Psoas muscle (tissue), 8 donors: ENCODE measurements at regions of chr4 and their contacts with region 1.

Region 1: GRCh38 chr4:85968945-85969819 is 390.7 kb downstream of the MAPK10 start:
- DNase-seq: no peak
- ATAC-seq: peak; percentile 38 to 77 (median 50)
- H3K4me3 ChIP-seq: no peak overlapping the region
- H3K27ac ChIP-seq: no peak overlapping the region
- H3K4me1 ChIP-seq: peaks cover 8% of the 10 kb centered on the region
- H3K27me3 ChIP-seq: no peaks in the 10 kb centered on the region
- CTCF ChIP-seq: peak; percentile 61

Region 2: GRCh38 chr4:84661191-84661939 is 1307.8 kb before region 1 on chr4:
- intact Hi-C with region 1: no loop called
- DNase-seq: no peak
- ATAC-seq: no peak
- H3K4me3 ChIP-seq: no peak overlapping the region
- H3K27ac ChIP-seq: no peak overlapping the region
- H3K4me1 ChIP-seq: no peaks in the 10 kb centered on the region
- H3K27me3 ChIP-seq: no peaks in the 10 kb centered on the region
- CTCF ChIP-seq: no peak

Region 3: GRCh38 chr4:85147439-85148076 is 821.6 kb before region 1 on chr4:
- intact Hi-C with region 1: loop called in 1 of 2 experiments (anchors 10 kb)
- DNase-seq: peak in 1 of 2 donors; percentile 54
- ATAC-seq: peak in 2 of 4 donors; percentile 57 to 79
- H3K4me3 ChIP-seq: peak overlapping the region; percentile 16
- H3K27ac ChIP-seq: no peak overlapping the region
- H3K4me1 ChIP-seq: no peaks in the 10 kb centered on the region
- H3K27me3 ChIP-seq: no peaks in the 10 kb centered on the region
- CTCF ChIP-seq: peak; percentile 61

Region 4: GRCh38 chr4:85798012-85798770 is 171.0 kb before region 1 on chr4:
- intact Hi-C with region 1: loop called (anchors 2 to 5 kb)
- DNase-seq: no peak
- ATAC-seq: no peak
- H3K4me3 ChIP-seq: no peak overlapping the region
- H3K27ac ChIP-seq: no peak overlapping the region
- H3K4me1 ChIP-seq: peaks cover under 1% of the 10 kb centered on the region
- H3K27me3 ChIP-seq: no peaks in the 10 kb centered on the region
- CTCF ChIP-seq: no peak

Region 5: GRCh38 chr4:85826060-85826678 is 143.0 kb before region 1 on chr4:
- intact Hi-C with region 1: loop called in 1 of 2 experiments (anchors 10 kb)
- DNase-seq: no peak
- ATAC-seq: peak in 2 of 4 donors; percentile 36 to 39
- H3K4me3 ChIP-seq: no peak overlapping the region
- H3K27ac ChIP-seq: peak overlapping the region; percentile 31
- H3K4me1 ChIP-seq: peaks cover 17% of the 10 kb centered on the region
- H3K27me3 ChIP-seq: no peaks in the 10 kb centered on the region
- CTCF ChIP-seq: no peak

Region 6: DNA sequence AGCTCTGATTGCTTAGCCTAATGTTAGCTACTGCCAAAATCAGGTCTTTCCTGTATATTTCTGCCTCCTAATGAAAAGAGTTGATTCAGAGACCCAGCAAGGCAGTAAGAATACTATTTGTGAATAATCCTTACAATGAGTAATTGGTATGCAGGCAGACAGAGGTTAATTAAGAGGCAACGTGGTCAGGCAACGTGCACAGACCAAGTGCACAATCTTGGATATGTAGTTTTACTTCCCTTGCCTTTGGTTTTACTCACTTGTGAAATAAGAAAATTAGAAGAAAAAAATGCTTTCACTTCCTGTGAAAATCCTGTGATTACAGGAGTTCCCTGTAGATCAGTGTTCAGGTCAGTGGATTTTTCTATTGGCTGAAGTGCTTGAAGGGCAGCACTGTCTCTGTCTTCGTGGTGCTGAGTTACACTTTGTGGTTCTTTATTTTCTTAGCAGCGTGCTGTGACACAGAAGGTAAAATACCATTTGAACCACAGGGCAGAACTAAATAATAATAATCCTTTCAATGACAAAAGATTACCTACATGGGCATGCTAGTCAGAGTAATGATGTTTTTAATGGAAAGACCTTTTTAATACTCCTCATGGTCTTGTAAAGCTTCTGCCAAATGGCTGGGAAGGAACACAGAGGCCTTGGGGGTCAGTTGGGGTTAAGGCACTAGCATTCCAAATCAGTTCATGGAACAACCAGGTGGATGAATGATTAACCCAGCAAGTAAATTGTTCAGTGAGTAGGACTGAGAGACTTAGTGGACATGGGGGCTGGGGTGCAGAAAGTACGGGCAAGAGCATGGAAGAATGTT is 40.2 kb before region 1 on chr4:
- intact Hi-C with region 1: no loop called
- DNase-seq: no peak
- ATAC-seq: no peak
- H3K4me3 ChIP-seq: no peak overlapping the region
- H3K27ac ChIP-seq: no peak overlapping the region
- H3K4me1 ChIP-seq: peaks cover 3% of the 10 kb centered on the region
- H3K27me3 ChIP-seq: no peaks in the 10 kb centered on the region
- CTCF ChIP-seq: no peak